ENCODE measurements at regions of chr10 and their contacts with region 1.

Region 1: GRCh38 chr10:5595591-5596590 is 70.5 kb downstream of the ASB13 start:
- H3K4me3 ChIP-seq: no peak overlapping the region
- H3K27ac ChIP-seq: no peak overlapping the region; the same call in 1 of the 2 replicates
- H3K4me1 ChIP-seq: peaks cover 10% of the 10 kb centered on the region
- CTCF ChIP-seq: no peak

Region 2: GRCh38 chr10:5404208-5405041 is 191.5 kb before region 1 on chr10 and contains the start of gene TUBAL3:
- CTCF ChIA-PET with region 1: no interaction called
- POLR2A ChIA-PET with region 1: no interaction called
- H3K4me3 ChIP-seq: no peak within 1 kb of the TSS
- H3K27ac ChIP-seq: no peak within 1 kb of the TSS
- H3K4me1 ChIP-seq: no peaks in the 10 kb centered on the region
- CTCF ChIP-seq: no peak

Region 3: DNA sequence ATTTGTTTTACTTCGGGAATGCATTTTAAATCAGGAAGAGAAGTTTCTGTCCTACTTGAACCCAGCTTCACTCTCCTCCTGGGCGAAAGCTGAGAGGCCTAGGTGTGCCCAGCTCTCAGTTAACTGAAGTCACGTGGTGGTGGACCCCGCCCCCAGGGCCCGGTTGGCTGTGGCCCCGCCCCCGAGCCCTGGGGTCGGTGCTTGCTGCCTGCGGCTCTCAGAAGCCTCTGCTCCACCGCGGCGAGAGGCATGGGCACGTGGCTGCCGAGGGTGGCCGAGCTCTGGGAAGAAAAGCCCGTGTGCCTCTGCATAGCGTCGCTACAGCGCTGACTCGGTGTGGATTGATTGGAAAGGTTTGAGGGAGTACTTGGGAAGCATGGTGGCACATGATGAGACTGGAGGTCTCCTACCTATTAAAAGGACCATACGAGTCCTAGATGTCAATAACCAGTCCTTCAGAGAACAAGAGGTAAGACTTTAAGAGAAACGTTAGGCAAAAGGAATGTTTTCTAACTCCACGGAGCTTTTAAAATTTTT is 149.4 kb before region 1 on chr10:
- CTCF ChIA-PET with region 1: interaction called, 10 read pairs
- POLR2A ChIA-PET with region 1: interaction called, 3 read pairs
- H3K4me3 ChIP-seq: peak overlapping the region; percentile 42
- H3K27ac ChIP-seq: peak overlapping the region; percentile 11; the same call in 1 of the 2 replicates
- H3K4me1 ChIP-seq: peaks cover 18% of the 10 kb centered on the region; the same call in 1 of the 2 replicates
- CTCF ChIP-seq: no peak

Measured in HEK293 (cell line).